PC-3 (cell line): ENCODE measurements at regions of chrX and their contacts with region 1.

Region 1: DNA sequence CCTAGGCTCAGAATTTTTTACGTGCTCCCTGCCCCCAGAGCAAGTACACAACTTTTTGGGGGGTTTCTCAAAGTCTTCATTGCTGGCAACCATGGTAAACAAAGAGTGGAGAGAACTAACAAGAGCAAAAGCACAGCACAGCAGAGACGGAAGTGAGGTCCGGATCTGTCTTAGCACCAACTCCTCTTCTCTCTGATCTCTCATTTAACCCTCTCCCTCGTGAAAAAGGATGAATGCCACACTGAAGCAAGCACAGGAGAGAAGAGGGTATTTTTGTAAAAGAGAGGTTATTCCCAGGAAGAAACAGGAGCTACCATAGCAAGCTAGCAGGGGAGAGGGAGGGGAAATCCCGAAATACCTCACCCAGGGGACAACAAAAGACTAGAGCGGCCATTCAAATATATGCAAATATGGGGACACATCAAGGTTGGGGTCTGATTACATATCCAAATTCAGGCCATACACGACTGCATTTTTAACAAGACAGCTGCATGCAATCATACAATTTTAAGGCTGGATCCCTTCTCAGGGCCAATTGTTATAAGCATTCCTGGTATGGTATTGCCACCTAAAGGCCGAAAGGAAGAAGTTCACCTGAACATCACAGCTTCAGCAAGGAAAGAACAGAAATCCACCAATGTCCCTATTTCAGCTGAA is 46.6 kb downstream of the CD40LG start:
- DNase-seq: peak; percentile 64
- ATAC-seq: 0 out of 2 replicates have a peak, but pooled peaks have one; percentile 30
- H3K4me3 ChIP-seq: no peak overlapping the region
- H3K27ac ChIP-seq: no peak overlapping the region
- H3K4me1 ChIP-seq: peaks cover 22% of the 10 kb centered on the region
- H3K27me3 ChIP-seq: no peaks in the 10 kb centered on the region
- CTCF ChIP-seq: peak; percentile 85

Region 2: GRCh38 chrX:136028251-136028984 is 666.1 kb before region 1 on chrX:
- CTCF ChIA-PET with region 1: no interaction called
- POLR2A ChIA-PET with region 1: no interaction called
- intact Hi-C with region 1: loop called (anchors 5 kb)
- DNase-seq: peak; percentile 80
- ATAC-seq: peak; percentile 77
- H3K4me3 ChIP-seq: no peak overlapping the region
- H3K27ac ChIP-seq: no peak overlapping the region
- H3K4me1 ChIP-seq: no peaks in the 10 kb centered on the region
- H3K27me3 ChIP-seq: no peaks in the 10 kb centered on the region
- CTCF ChIP-seq: peak; percentile 79

Region 3: GRCh38 chrX:136291824-136292223 is 402.7 kb before region 1 on chrX:
- CTCF ChIA-PET with region 1: no interaction called
- POLR2A ChIA-PET with region 1: no interaction called
- intact Hi-C with region 1: no loop called
- DNase-seq: peak; percentile 47
- ATAC-seq: no peak
- H3K4me3 ChIP-seq: no peak overlapping the region
- H3K27ac ChIP-seq: no peak overlapping the region
- H3K4me1 ChIP-seq: 0 out of 2 replicates have a peak, but pooled peaks cover 4% of the 10 kb centered on the region
- H3K27me3 ChIP-seq: no peaks in the 10 kb centered on the region
- CTCF ChIP-seq: no peak

Region 4: DNA sequence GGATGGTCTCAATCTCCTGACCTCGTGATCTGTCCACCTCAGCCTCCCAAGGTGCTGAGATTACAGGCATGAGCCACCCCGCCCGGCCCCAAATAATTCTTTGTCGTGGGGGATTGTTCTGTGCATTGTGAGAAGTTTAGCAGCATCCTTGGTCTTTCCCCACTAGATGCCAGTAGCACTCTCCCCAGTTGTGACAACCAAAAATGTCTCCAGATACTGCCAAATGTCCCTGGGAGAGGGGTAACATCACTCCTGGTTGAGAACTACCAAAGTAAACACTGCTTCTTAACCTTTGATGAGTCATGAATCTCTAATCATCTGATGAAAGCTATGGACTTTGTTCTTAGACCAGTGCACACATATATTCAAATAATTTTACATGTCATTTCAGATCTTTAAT is 297.6 kb before region 1 on chrX:
- CTCF ChIA-PET with region 1: interaction called, 11 read pairs
- POLR2A ChIA-PET with region 1: no interaction called
- intact Hi-C with region 1: loop called (anchors 2 kb)
- DNase-seq: peak; percentile 85
- ATAC-seq: peak; percentile 79
- H3K4me3 ChIP-seq: no peak overlapping the region
- H3K27ac ChIP-seq: peak overlapping the region; percentile 29; the same call in 1 of the 2 replicates
- H3K4me1 ChIP-seq: peaks cover 29% of the 10 kb centered on the region
- H3K27me3 ChIP-seq: no peaks in the 10 kb centered on the region
- CTCF ChIP-seq: peak; percentile 61

Region 5: DNA sequence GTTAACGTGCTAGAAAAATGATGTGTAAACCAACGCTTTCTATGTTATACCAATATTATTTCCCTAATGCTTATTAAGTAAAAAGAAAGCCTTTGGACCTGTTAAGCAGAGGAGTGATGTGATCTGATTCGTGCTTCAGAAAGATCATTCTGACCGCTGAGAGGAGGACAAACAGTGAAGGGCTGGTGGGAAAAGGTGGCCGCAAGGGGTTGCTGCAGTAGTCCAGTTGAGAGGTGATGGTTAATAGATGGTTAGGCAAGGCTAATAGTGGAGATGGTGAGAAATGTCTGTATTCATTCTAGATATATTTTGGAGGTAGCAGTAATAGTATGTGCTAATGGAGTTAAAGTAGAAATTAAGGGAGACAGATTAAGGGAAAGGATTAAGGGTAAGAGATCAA is 175.5 kb before region 1 on chrX:
- CTCF ChIA-PET with region 1: no interaction called
- POLR2A ChIA-PET with region 1: no interaction called
- intact Hi-C with region 1: loop called (anchors 5 kb)
- DNase-seq: no peak
- ATAC-seq: 0 out of 2 replicates have a peak, but pooled peaks have one; percentile 27
- H3K4me3 ChIP-seq: no peak overlapping the region
- H3K27ac ChIP-seq: no peak overlapping the region
- H3K4me1 ChIP-seq: 0 out of 2 replicates have a peak, but pooled peaks cover 4% of the 10 kb centered on the region
- H3K27me3 ChIP-seq: no peaks in the 10 kb centered on the region
- CTCF ChIP-seq: peak; percentile 26; the same call in 1 of the 2 replicates

Region 6: DNA sequence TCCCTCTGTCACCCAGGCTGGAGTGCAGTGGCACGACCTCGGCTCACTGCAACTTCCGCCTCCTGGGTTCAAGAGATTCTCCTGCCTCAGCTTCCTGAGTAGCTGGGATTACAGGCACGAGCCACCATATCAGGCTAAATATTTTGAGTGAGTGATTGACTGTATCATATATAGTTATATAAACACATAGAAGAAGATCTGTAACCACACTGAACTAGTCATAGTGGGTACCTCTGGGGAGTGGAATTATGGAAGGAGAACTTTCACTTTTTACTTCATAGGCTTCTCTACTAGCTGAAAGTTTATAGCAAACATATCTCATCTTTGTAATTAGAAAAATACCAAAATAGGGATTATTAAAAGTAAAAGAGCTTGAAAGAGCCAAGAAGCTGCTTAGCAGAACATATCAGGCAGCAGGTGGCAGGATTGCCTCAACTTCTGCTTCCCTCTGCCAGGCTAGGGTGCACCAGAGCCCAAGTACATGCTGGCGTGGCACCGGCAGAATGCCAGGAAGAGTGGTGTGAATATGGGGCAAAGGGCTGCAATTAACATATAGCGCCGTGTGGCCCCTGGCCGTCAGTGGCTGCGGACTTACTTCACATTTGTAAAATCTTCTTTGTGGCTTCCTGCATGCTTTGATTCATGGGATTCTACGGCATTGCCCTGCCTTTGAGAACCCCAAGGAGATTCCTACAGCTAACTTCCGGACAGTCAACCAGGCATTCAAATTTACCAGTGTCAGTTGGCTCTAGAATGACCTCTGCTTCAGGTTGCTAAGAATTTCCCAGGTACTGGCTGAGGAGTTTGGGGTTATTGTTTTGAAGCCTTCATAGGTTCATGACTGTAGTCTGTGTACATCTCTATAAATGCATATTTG is 86.0 kb before region 1 on chrX:
- CTCF ChIA-PET with region 1: interaction called, 12 read pairs
- POLR2A ChIA-PET with region 1: no interaction called
- intact Hi-C with region 1: loop called (anchors 1 kb)
- DNase-seq: peak; percentile 57
- ATAC-seq: peak; percentile 81
- H3K4me3 ChIP-seq: no peak overlapping the region
- H3K27ac ChIP-seq: peak overlapping the region; percentile 60; the same call in 1 of the 2 replicates
- H3K4me1 ChIP-seq: peaks cover 26% of the 10 kb centered on the region
- H3K27me3 ChIP-seq: no peaks in the 10 kb centered on the region
- CTCF ChIP-seq: peak; percentile 62

Region 7: GRCh38 chrX:136920001-136920400 is 225.4 kb after region 1 on chrX:
- CTCF ChIA-PET with region 1: no interaction called
- POLR2A ChIA-PET with region 1: no interaction called
- intact Hi-C with region 1: no loop called
- DNase-seq: no peak
- ATAC-seq: no peak
- H3K4me3 ChIP-seq: no peak overlapping the region
- H3K27ac ChIP-seq: no peak overlapping the region
- H3K4me1 ChIP-seq: no peaks in the 10 kb centered on the region
- H3K27me3 ChIP-seq: no peaks in the 10 kb centered on the region
- CTCF ChIP-seq: no peak